ENCODE measurements at regions of chr10 and their contacts with region 1.

Region 1: GRCh38 chr10:129030996-129031843 is 435.8 kb upstream of the MGMT start:
- DNase-seq: peak in 1 of 2 experiments; percentile 25
- H3K4me3 ChIP-seq: no peak overlapping the region
- H3K27ac ChIP-seq: no peak overlapping the region
- H3K4me1 ChIP-seq: no peaks in the 10 kb centered on the region
- H3K27me3 ChIP-seq: peaks cover 65% of the 10 kb centered on the region
- CTCF ChIP-seq: peak; percentile 67

Region 2: DNA sequence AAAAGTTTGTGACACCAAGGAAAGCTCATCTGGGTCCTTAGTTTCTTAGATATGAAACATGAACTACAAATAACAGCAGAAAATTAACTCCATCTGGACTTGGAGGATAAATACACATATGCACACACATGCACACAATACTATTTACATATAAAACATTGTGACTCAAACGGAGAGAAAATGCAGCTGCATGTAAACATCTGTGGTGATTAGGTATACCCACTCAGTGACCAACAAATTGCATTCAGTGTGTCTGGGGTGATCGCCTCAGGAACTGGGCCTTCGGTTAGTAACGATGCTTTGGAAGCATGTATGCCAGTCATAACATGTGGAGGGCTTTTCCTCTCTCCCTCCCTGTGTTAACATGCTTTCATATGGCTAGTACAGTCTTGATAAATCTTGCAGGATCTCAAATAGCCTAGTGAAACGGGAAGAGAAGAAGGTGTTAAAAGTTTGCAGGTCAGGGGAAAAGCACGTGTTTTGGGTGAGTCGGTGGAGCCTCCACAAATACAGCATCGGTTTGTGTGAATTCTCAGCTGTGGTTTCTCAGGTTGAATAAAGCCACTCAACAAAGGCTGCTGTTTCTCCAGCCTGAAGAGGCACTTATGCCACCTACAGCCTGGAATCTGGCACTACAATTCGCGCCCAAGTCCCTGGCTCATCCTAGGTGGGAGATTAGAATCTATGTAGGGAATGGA is 1096.3 kb after region 1 on chr10:
- CTCF ChIA-PET with region 1: no interaction called
- POLR2A ChIA-PET with region 1: no interaction called
- intact Hi-C with region 1: loop called (anchors 10 kb)
- DNase-seq: peak in 1 of 2 experiments; percentile 47
- H3K4me3 ChIP-seq: no peak overlapping the region
- H3K27ac ChIP-seq: no peak overlapping the region
- H3K4me1 ChIP-seq: no peaks in the 10 kb centered on the region
- H3K27me3 ChIP-seq: no peaks in the 10 kb centered on the region
- CTCF ChIP-seq: peak; percentile 63